ENCODE measurements at regions of chr16 and their contacts with region 1.

Region 1: GRCh38 chr16:53130159-53131049 is 75.6 kb downstream of the CHD9 start:
- DNase-seq: peak; percentile 88 to 97 (median 96)
- ATAC-seq: peak; percentile 91
- H3K4me3 ChIP-seq: peak overlapping the region; percentile 76 to 92
- H3K4me3 Mint-ChIP-seq: peak overlapping the region; percentile 84
- H3K27ac ChIP-seq: peak overlapping the region; percentile 52 to 66
- H3K27ac Mint-ChIP-seq: peak overlapping the region; percentile 86
- H3K4me1 ChIP-seq: no peaks in the 10 kb centered on the region
- H3K4me1 Mint-ChIP-seq: peaks cover 20% of the 10 kb centered on the region
- H3K27me3 ChIP-seq: no peaks in the 10 kb centered on the region
- H3K27me3 Mint-ChIP-seq: no peaks in the 10 kb centered on the region
- CTCF ChIP-seq: no peak

Region 2: GRCh38 chr16:53159781-53160436 is 29.5 kb after region 1 on chr16:
- CTCF ChIA-PET with region 1: interaction called, 5 read pairs
- POLR2A ChIA-PET with region 1: no interaction called
- intact Hi-C with region 1: loop called (anchors 1 to 2 kb)
- DNase-seq: peak in 3 of 9 experiments; percentile 23 to 79 (median 71)
- ATAC-seq: peak; percentile 87
- H3K4me3 ChIP-seq: no peak overlapping the region
- H3K4me3 Mint-ChIP-seq: no peak overlapping the region
- H3K27ac ChIP-seq: no peak overlapping the region
- H3K27ac Mint-ChIP-seq: no peak overlapping the region
- H3K4me1 ChIP-seq: no peaks in the 10 kb centered on the region
- H3K4me1 Mint-ChIP-seq: peaks cover 3% of the 10 kb centered on the region
- H3K27me3 ChIP-seq: no peaks in the 10 kb centered on the region
- H3K27me3 Mint-ChIP-seq: no peaks in the 10 kb centered on the region
- CTCF ChIP-seq: peak; percentile 83

Region 3: GRCh38 chr16:53457670-53458069 is 327.3 kb after region 1 on chr16:
- CTCF ChIA-PET with region 1: no interaction called
- POLR2A ChIA-PET with region 1: no interaction called
- intact Hi-C with region 1: loop called in 1 of 2 experiments (anchors 1 kb)
- DNase-seq: peak; percentile 46 to 96 (median 76)
- ATAC-seq: peak; percentile 70
- H3K4me3 ChIP-seq: peak overlapping the region; percentile 42 to 49
- H3K4me3 Mint-ChIP-seq: peak overlapping the region; percentile 76
- H3K27ac ChIP-seq: peak overlapping the region; percentile 65 to 72
- H3K27ac Mint-ChIP-seq: peak overlapping the region; percentile 94
- H3K4me1 ChIP-seq: peaks cover 90% of the 10 kb centered on the region
- H3K4me1 Mint-ChIP-seq: peaks cover 92% of the 10 kb centered on the region
- H3K27me3 ChIP-seq: no peaks in the 10 kb centered on the region
- H3K27me3 Mint-ChIP-seq: no peaks in the 10 kb centered on the region
- CTCF ChIP-seq: no peak

Region 4: DNA sequence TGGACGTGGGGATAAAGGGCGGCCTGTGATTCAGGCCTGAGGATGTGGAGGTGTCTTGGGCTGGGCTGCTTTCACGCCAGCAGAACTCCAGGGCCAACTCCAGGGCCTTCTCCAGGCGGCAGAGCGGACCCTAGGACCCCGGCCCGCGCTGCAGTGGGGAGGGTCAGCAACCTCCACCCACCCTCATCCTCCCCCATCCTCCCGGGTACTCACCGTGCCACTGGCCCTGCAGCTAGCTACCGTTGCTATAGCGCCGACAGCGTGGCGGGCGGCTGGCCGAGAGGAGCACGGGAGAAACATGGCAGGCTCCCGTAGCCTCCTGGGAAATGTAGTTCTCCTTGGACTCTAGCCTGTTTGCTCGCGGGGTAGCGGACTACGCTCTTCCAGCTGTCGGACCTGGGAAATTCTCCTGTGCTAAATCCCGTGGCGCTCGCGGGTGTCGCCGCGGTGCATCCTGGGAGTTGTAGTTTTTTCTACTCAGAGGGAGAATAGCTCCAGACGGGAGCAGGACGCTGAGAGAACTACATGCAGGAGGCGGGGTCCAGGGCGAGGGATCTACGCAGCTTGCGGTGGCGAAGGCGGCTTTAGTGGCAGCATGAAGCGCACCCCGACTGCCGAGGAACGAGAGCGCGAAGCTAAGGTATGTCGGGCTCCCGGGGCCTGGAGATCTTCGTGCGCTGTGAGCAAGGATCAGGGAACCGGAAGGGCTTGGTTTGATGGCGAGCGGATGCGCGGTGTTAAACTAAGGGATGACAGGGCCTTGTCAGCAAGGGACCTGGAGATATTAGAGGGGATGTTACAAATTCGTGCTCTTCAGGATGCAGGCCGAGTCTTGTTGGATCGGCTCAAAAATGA is 573.4 kb after region 1 on chr16 and contains the starts of genes FTO and RPGRIP1L:
- CTCF ChIA-PET with region 1: no interaction called
- POLR2A ChIA-PET with region 1: no interaction called
- intact Hi-C with region 1: loop called (anchors 1 to 2 kb)
- DNase-seq: peak; percentile 89 to 98 (median 95)
- ATAC-seq: peak; percentile 90
- H3K4me3 ChIP-seq: peak within 1 kb of the TSS; percentile 75 to 86
- H3K4me3 Mint-ChIP-seq: peak within 1 kb of the TSS; percentile 96
- H3K27ac ChIP-seq: peak within 1 kb of the TSS; percentile 61 to 68
- H3K27ac Mint-ChIP-seq: peak within 1 kb of the TSS; percentile 95
- H3K4me1 ChIP-seq: peaks cover 21% of the 10 kb centered on the region
- H3K4me1 Mint-ChIP-seq: peaks cover 48% of the 10 kb centered on the region
- H3K27me3 ChIP-seq: no peaks in the 10 kb centered on the region
- H3K27me3 Mint-ChIP-seq: no peaks in the 10 kb centered on the region
- CTCF ChIP-seq: no peak
- total RNA-seq, gene FTO: 30.4 to 32.9 TPM
- total RNA-seq, gene RPGRIP1L: 1.5 to 2.2 TPM